Dendritic cell treated with granulocyte-macrophage colony-stimulating factor and Interleukin-4, amounts not matched to agents 40 ng/mL and 50 ng/mL, for 4 days (primary cell): ENCODE measurements at regions of chr18 and their contacts with region 1.

Region 1: GRCh38 chr18:31819106-31819924 is 58.6 kb upstream of the SLC25A52 start:
- H3K4me3 Mint-ChIP-seq: no peak overlapping the region
- H3K27ac Mint-ChIP-seq: no peak overlapping the region
- H3K4me1 Mint-ChIP-seq: peaks cover 21% of the 10 kb centered on the region
- H3K27me3 Mint-ChIP-seq: peaks cover 2% of the 10 kb centered on the region

Region 2: DNA sequence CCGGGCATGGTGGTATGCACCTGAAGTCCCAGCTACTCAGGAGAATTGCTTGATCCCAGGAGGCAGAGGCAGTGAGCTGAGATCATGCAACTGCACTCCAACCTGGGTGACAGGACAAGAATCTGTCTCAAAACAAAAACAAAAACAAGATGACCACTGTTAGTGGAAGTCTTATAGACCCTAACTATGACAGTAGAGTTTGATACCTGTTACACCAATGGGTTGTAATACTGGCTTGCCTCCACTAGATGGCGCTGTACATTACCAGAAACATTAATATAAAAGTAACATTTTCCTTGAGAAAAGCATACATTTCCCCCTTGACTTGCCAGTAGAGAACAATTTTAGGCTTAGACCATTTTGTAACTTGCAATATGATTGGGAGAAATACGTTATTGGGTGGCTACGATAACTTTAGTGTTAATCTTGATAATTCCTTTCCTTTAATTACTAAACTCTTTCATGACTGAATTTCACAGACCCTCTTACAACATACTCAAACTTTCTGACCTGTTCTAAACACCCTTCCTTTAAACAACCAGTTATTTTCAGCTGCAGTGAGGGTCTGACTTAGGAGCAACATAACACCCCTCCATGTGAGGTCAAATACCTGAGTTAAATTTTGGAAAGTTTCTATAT is 78.1 kb before region 1 on chr18:
- intact Hi-C with region 1: loop called (anchors 1 kb)
- H3K4me3 Mint-ChIP-seq: no peak overlapping the region
- H3K27ac Mint-ChIP-seq: no peak overlapping the region
- H3K4me1 Mint-ChIP-seq: no peaks in the 10 kb centered on the region
- H3K27me3 Mint-ChIP-seq: peaks cover 2% of the 10 kb centered on the region